ENCODE measurements at regions of chr10 and their contacts with region 1.

Region 1: DNA sequence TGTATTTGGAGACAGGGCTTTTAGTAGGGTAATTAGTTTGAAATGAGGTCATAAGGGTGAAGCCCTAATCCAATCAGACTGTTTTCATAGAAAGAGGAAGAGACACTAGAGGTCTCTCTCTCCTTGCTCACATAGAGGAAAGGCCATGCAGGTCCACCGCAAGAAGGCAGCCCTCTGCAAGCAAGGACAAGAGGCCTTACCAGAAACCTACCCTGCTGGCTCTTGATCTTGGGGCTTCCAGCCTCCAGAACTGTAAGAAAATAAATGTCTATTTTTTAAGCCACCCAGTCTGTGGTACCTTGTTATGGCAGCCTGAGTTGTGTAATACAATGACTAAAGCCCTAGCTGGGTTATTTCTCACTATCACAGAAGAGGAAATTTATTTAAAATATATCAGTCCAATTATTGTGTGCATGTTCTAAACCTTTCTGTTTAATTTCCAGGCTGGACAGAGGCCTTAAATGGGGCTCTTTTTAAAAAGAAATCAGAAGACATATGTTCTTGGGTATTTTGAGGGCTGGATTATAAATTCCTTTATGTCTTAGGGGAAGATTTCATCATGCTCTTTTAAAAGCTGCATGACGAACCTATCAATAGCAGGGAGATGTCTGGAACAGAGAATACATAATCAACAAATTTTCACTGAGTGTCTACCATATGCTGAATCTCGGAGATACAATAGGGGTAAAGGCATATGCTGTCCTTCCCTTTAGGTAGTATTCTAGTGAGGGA is 12.9 kb upstream of the TMEM26 start:
- DNase-seq: no peak
- H3K4me3 ChIP-seq: no peak overlapping the region
- H3K27ac ChIP-seq: no peak overlapping the region
- H3K4me1 ChIP-seq: no peaks in the 10 kb centered on the region
- H3K27me3 ChIP-seq: no peaks in the 10 kb centered on the region
- CTCF ChIP-seq: no peak
- POLR2A ChIP-seq: no peak

Region 2: DNA sequence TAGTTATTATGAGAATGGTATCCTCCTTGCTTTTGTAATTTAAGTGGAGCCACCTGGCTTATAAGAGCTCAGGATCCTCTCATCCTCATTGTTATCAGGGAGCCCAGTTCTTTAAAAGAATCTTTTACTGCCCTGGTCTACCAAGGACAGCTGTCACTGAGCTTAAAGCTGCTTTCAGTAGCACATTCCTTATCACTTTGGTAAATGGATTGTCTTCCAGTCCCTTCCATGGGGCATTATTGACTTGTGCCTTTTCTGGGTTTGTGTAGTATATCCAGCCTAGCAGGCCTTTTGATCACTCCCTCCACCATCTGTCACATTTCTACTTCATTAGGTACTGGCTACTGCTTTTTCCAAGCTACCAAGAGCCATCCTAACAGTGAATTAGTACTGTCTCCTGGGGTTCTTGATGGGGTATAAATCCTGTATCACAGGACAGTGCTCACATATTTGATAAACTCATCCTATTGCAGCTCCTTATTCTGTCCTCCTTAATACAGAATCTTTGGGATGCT is 221.7 kb before region 1 on chr10:
- intact Hi-C with region 1: no loop called
- DNase-seq: no peak
- H3K4me3 ChIP-seq: no peak overlapping the region
- H3K27ac ChIP-seq: no peak overlapping the region
- H3K4me1 ChIP-seq: no peaks in the 10 kb centered on the region
- H3K27me3 ChIP-seq: no peaks in the 10 kb centered on the region
- CTCF ChIP-seq: no peak
- POLR2A ChIP-seq: no peak

Region 3: DNA sequence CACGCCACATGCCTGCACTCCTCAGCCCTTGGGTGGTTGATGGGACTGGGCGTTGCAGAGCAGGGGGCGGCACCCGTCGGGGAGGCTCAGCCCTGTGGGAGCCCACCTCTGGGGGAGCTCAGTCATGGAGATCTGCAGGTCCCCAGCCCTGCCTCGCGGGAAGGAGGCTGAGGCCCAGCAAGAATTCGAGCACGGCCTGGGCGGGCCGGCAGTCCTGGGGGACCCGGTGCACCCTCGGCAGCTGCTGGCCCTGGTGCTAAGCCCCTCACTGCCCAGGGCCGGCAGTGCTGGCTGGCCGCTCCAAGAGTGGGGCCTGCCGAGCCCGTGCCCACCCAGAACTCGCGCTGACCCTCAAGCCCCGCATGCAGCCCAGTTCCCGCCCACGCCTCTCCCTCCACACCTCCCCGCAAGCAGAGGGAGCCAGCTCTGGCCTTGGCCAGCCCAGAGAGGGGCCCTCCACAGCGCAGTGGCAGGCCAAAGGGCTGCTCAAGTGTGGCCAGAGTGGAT is 89.2 kb before region 1 on chr10:
- intact Hi-C with region 1: no loop called
- DNase-seq: no peak
- H3K4me3 ChIP-seq: no peak overlapping the region
- H3K27ac ChIP-seq: no peak overlapping the region
- H3K4me1 ChIP-seq: no peaks in the 10 kb centered on the region
- H3K27me3 ChIP-seq: no peaks in the 10 kb centered on the region
- CTCF ChIP-seq: no peak
- POLR2A ChIP-seq: no peak

Region 4: GRCh38 chr10:61404751-61405150 is 61.3 kb before region 1 on chr10:
- intact Hi-C with region 1: no loop called
- DNase-seq: no peak
- H3K4me3 ChIP-seq: no peak overlapping the region
- H3K27ac ChIP-seq: no peak overlapping the region
- H3K4me1 ChIP-seq: no peaks in the 10 kb centered on the region
- H3K27me3 ChIP-seq: no peaks in the 10 kb centered on the region
- CTCF ChIP-seq: no peak
- POLR2A ChIP-seq: no peak

Region 5: DNA sequence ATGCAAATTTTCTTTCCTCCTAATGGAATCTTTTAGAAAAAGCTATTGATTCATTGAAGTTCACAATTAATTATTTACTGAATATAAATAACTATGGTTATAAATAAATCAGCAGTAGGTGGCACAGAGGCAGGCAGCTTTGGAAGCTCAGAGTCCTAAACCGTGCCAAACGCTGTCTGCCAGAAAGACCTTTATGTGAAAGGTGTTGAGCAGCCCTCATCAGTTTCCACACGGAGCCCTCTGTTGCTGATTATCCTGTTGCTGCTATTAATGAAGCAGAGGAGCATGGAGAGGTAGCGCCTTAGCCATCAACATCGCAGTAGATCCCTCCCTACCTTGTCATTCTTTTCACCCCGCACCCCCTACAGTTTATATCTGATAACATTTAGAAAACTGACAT is 751.6 kb after region 1 on chr10:
- intact Hi-C with region 1: loop called (anchors 10 kb)
- DNase-seq: no peak
- H3K4me3 ChIP-seq: no peak overlapping the region
- H3K27ac ChIP-seq: no peak overlapping the region
- H3K4me1 ChIP-seq: no peaks in the 10 kb centered on the region
- H3K27me3 ChIP-seq: no peaks in the 10 kb centered on the region
- CTCF ChIP-seq: no peak
- POLR2A ChIP-seq: no peak